CD4-positive, alpha-beta T cell (primary cell): ENCODE measurements at regions of chr7 and their contacts with region 1.

Region 1: GRCh38 chr7:130961128-130961601 is 227.2 kb upstream of the KLF14 start:
- DNase-seq: peak; percentile 28 to 95 (median 60)
- ATAC-seq: peak; percentile 79
- H3K4me3 ChIP-seq: peak overlapping the region; percentile 58
- H3K4me3 Mint-ChIP-seq: peak overlapping the region; percentile 91
- H3K27ac ChIP-seq: peak overlapping the region; percentile 73 to 90
- H3K27ac Mint-ChIP-seq: no peak overlapping the region
- H3K4me1 ChIP-seq: peaks cover 48% of the 10 kb centered on the region
- H3K4me1 Mint-ChIP-seq: peaks cover 49% of the 10 kb centered on the region
- H3K27me3 ChIP-seq: no peaks in the 10 kb centered on the region
- H3K27me3 Mint-ChIP-seq: no peaks in the 10 kb centered on the region
- CTCF ChIP-seq: no peak

Region 2: GRCh38 chr7:130912862-130913631 is 48.1 kb before region 1 on chr7:
- CTCF ChIA-PET with region 1: interaction called, 3 read pairs
- POLR2A ChIA-PET with region 1: interaction called, 25 read pairs
- intact Hi-C with region 1: loop called in 1 of 2 experiments (anchors 1 kb)
- DNase-seq: peak; percentile 56 to 96 (median 72)
- ATAC-seq: peak; percentile 90
- H3K4me3 ChIP-seq: peak overlapping the region; percentile 61
- H3K4me3 Mint-ChIP-seq: peak overlapping the region; percentile 92
- H3K27ac ChIP-seq: peak overlapping the region; percentile 85 to 92
- H3K27ac Mint-ChIP-seq: peak overlapping the region; percentile 92
- H3K4me1 ChIP-seq: peaks cover 66% of the 10 kb centered on the region
- H3K4me1 Mint-ChIP-seq: peaks cover 93% of the 10 kb centered on the region
- H3K27me3 ChIP-seq: no peaks in the 10 kb centered on the region
- H3K27me3 Mint-ChIP-seq: no peaks in the 10 kb centered on the region
- CTCF ChIP-seq: no peak

Region 3: DNA sequence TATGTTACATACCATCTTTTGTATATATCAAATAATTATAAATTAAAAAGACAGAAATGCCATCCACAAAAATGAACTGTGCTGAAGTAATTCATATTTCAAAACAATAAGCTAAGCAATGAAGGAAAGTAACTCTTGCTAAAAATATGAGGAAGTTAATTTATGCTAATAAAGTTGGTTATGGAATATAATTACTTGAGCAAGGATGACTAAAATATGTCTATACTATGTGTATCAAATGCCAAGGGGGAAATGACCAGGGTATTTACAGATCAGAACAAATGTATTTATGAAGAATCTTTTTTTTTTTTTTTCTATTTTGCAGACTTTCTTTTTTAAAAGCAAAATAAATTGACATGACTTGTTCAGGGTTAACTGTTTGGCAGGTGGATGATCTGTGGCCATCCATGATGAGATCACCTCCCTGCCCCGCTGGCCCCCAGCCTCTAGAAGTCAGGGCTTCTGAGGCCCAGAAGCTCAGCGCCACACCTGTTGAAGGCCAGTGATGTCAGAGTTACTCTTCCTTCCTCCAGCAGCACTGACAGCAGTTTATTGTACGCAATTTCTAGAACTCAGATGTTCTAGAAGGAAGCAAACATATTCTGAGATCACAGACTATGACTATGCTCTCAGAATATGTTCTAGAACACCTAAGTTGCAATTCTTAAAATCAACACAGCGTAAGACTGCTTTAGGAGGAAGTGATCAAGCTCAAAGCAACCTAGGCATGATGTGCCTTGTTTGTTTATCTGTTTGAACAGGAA is 31.1 kb before region 1 on chr7:
- CTCF ChIA-PET with region 1: interaction called, 4 read pairs
- POLR2A ChIA-PET with region 1: interaction called, 17 read pairs
- intact Hi-C with region 1: no loop called
- DNase-seq: peak in 6 of 14 experiments; percentile 32 to 81 (median 59)
- ATAC-seq: peak; percentile 66
- H3K4me3 ChIP-seq: no peak overlapping the region
- H3K4me3 Mint-ChIP-seq: peak overlapping the region; percentile 67
- H3K27ac ChIP-seq: peak overlapping the region; percentile 46 to 65
- H3K27ac Mint-ChIP-seq: peak overlapping the region; percentile 80
- H3K4me1 ChIP-seq: peaks cover 70% of the 10 kb centered on the region
- H3K4me1 Mint-ChIP-seq: peaks cover 96% of the 10 kb centered on the region
- H3K27me3 ChIP-seq: no peaks in the 10 kb centered on the region
- H3K27me3 Mint-ChIP-seq: no peaks in the 10 kb centered on the region
- CTCF ChIP-seq: no peak

Region 4: DNA sequence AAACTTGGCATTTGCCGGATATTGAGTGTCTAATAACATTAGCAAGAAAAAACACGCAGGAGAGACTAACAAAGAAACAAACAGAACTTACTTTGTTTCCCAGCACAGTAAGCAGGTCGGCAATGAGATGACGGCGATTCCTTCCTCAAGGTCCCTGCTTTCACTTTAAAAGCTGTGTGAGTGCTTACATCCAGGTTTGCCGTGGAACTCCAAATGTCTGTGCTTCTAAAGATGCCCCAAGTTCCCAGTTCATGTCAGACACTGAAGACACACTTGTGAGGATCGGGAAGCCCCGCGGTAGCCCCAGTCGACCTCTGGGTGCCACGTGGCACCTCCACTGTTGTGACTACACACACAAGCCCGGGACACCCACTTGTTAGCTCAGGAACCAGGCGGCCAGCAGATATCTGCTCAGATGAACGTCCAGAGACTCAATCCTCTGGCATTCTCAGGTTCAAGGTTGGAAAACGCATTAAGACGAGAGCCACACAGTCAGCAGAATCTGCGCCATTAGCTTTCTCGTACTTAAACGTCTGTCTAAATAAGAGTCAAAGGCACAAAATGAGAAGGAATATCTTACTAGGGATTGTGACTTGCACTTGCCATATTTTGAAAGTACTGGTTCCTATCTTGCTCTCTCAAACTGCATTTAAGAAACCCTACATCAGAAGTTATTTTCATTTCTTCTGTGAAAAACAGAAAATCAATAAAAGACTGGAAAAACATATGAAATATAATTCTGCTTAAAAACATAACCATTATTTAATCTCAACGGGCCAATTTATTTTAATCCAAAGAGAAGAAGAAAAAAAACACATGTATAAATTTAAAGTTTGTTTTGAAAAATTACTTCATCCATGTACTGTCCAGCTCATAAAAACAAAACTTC is 19.6 kb before region 1 on chr7:
- CTCF ChIA-PET with region 1: interaction called, 12 read pairs
- POLR2A ChIA-PET with region 1: interaction called, 97 read pairs
- intact Hi-C with region 1: loop called in 1 of 2 experiments (anchors 1 kb)
- DNase-seq: peak in 6 of 14 experiments; percentile 29 to 78 (median 58)
- ATAC-seq: no peak
- H3K4me3 ChIP-seq: peak overlapping the region; percentile 64
- H3K4me3 Mint-ChIP-seq: peak overlapping the region; percentile 88
- H3K27ac ChIP-seq: peak overlapping the region; percentile 25 to 86
- H3K27ac Mint-ChIP-seq: peak overlapping the region; percentile 98
- H3K4me1 ChIP-seq: peaks cover 47% of the 10 kb centered on the region
- H3K4me1 Mint-ChIP-seq: peaks cover 96% of the 10 kb centered on the region
- H3K27me3 ChIP-seq: no peaks in the 10 kb centered on the region
- H3K27me3 Mint-ChIP-seq: no peaks in the 10 kb centered on the region
- CTCF ChIP-seq: no peak

Region 5: GRCh38 chr7:130947792-130948580 is 13.2 kb before region 1 on chr7:
- CTCF ChIA-PET with region 1: interaction called, 15 read pairs
- POLR2A ChIA-PET with region 1: interaction called, 97 read pairs
- intact Hi-C with region 1: loop called in 1 of 2 experiments (anchors 1 kb)
- DNase-seq: peak in 3 of 14 experiments; percentile 62 to 84 (median 64)
- ATAC-seq: peak; percentile 16
- H3K4me3 ChIP-seq: peak overlapping the region; percentile 19
- H3K4me3 Mint-ChIP-seq: peak overlapping the region; percentile 74
- H3K27ac ChIP-seq: peak overlapping the region in 1 of 2 donors; percentile 68
- H3K27ac Mint-ChIP-seq: peak overlapping the region; percentile 98
- H3K4me1 ChIP-seq: peaks cover 59% of the 10 kb centered on the region
- H3K4me1 Mint-ChIP-seq: peaks cover 54% of the 10 kb centered on the region
- H3K27me3 ChIP-seq: no peaks in the 10 kb centered on the region
- H3K27me3 Mint-ChIP-seq: no peaks in the 10 kb centered on the region
- CTCF ChIP-seq: no peak

Region 6: GRCh38 chr7:130996841-130997231 is 35.7 kb after region 1 on chr7:
- CTCF ChIA-PET with region 1: no interaction called
- POLR2A ChIA-PET with region 1: interaction called, 3 read pairs
- intact Hi-C with region 1: loop called in 1 of 2 experiments (anchors 5 kb)
- DNase-seq: peak in 3 of 14 experiments; percentile 34 to 53 (median 42)
- ATAC-seq: peak; percentile 29
- H3K4me3 ChIP-seq: peak overlapping the region; percentile 0
- H3K4me3 Mint-ChIP-seq: peak overlapping the region; percentile 65
- H3K27ac ChIP-seq: peak overlapping the region in 1 of 2 donors; percentile 32
- H3K27ac Mint-ChIP-seq: peak overlapping the region; percentile 85
- H3K4me1 ChIP-seq: peaks cover 74% of the 10 kb centered on the region
- H3K4me1 Mint-ChIP-seq: peaks cover 85% of the 10 kb centered on the region
- H3K27me3 ChIP-seq: no peaks in the 10 kb centered on the region
- H3K27me3 Mint-ChIP-seq: no peaks in the 10 kb centered on the region
- CTCF ChIP-seq: no peak